Heart right ventricle (tissue), 16 donors: ENCODE measurements at regions of chr20 and their contacts with region 1.

Region 1: GRCh38 chr20:56574531-56575142 is 41.6 kb downstream of the FAM209B start:
- DNase-seq: no peak
- ATAC-seq: peak in 1 of 8 donors; percentile 35
- H3K4me3 ChIP-seq: no peak overlapping the region
- H3K27ac ChIP-seq: no peak overlapping the region
- H3K4me1 ChIP-seq: no peaks in the 10 kb centered on the region
- H3K27me3 ChIP-seq: peaks cover 0 to 5% (median 0%) of the 10 kb centered on the region in 7 donors
- CTCF ChIP-seq: no peak

Region 2: DNA sequence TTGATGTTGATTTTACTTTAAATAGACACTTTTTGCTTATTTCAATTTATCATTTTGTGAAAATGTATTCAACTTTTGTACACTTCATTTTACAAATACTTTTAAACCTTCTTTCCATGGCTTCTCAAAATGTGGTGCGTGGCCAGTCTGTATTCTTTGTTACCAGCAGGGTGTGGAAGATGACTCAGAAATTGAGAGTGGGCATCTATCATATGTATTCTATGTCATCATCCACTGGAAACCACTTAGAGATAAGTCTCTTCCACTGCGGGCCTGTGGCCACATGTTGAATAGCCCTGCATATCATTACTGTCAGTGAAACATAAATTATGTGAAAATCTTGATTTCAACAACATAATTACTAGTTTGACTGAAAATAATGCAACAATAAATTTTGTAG is 378.7 kb before region 1 on chr20:
- intact Hi-C with region 1: no loop called
- DNase-seq: no peak
- ATAC-seq: no peak
- H3K4me3 ChIP-seq: no peak overlapping the region
- H3K27ac ChIP-seq: no peak overlapping the region
- H3K4me1 ChIP-seq: no peaks in the 10 kb centered on the region
- H3K27me3 ChIP-seq: peaks cover 0 to 7% (median 0%) of the 10 kb centered on the region in 7 donors
- CTCF ChIP-seq: no peak

Region 3: GRCh38 chr20:56222196-56222595 is 352.4 kb before region 1 on chr20:
- intact Hi-C with region 1: loop called in 1 of 10 experiments (anchors 10 kb)
- DNase-seq: no peak
- ATAC-seq: no peak
- H3K4me3 ChIP-seq: no peak overlapping the region
- H3K27ac ChIP-seq: no peak overlapping the region
- H3K4me1 ChIP-seq: no peaks in the 10 kb centered on the region
- H3K27me3 ChIP-seq: peaks cover 0 to 9% (median 0%) of the 10 kb centered on the region in 7 donors
- CTCF ChIP-seq: no peak

Region 4: DNA sequence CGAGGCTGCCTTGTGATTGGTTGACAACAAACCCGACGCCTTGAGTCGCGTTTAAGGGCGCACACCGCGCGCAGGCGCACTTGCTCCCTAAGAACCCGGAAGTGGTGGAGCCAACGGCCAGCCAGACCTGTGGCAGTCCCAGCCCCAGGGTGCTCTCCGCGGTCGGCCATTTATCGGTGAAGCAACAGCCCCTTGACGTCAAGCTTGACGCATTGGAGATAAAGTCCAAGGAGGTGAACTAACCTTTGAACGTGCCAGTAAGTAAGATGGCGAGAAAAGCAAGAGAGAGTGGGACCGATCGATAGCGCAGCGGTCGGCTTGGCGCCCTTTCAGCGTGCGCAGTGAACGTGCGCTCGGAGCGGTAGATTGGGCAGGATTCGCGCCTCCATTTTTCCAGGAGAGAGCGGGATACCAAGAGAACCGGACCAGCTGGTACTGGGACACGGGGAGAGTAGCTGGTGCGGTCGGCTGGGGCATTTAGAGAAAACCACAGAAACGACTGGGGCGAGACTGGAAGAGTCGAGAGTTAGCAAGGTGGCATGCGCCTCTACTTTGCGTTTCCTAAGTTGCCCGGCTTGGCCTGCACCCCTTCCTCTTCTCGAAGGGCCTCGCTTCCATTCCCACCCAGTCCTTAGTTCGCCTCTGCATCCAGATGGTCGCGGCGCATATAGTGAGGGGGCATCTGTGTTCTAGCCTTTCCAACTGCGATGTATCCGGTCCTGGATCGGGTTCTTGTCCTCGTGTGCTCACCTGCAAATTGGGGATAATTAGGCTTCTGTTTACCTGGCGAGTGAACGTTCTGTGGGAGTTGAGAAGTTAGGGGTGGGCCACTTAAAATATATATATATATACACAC is 182.1 kb before region 1 on chr20 and contains the start of gene CSTF1:
- intact Hi-C with region 1: loop called in 2 of 10 experiments (anchors 5 to 10 kb)
- DNase-seq: peak; percentile 99 to 100
- ATAC-seq: peak; percentile 97 to 100 (median 98)
- H3K4me3 ChIP-seq: peak within 1 kb of the TSS; percentile 57 to 94 (median 80)
- H3K27ac ChIP-seq: peak within 1 kb of the TSS; percentile 1 to 93 (median 84)
- H3K4me1 ChIP-seq: peaks cover 2 to 31% (median 23%) of the 10 kb centered on the region in 9 donors
- H3K27me3 ChIP-seq: no peaks in the 10 kb centered on the region
- CTCF ChIP-seq: no peak
- total RNA-seq, gene CSTF1: 16.3 to 23.7 (median 21.6) TPM

Region 5: GRCh38 chr20:56400090-56400542 is 174.5 kb before region 1 on chr20:
- intact Hi-C with region 1: loop called in 3 of 10 experiments (anchors 5 to 10 kb)
- DNase-seq: peak in 1 of 2 donors; percentile 71
- ATAC-seq: peak in 5 of 8 donors; percentile 53 to 78 (median 68)
- H3K4me3 ChIP-seq: no peak overlapping the region
- H3K27ac ChIP-seq: no peak overlapping the region
- H3K4me1 ChIP-seq: peaks cover 0 to 11% (median 5%) of the 10 kb centered on the region in 9 donors
- H3K27me3 ChIP-seq: no peaks in the 10 kb centered on the region
- CTCF ChIP-seq: peak; percentile 65 to 92 (median 86)

Region 6: GRCh38 chr20:56558968-56559367 is 15.7 kb before region 1 on chr20:
- intact Hi-C with region 1: no loop called
- DNase-seq: peak; percentile 16 to 18
- ATAC-seq: peak in 7 of 8 donors; percentile 9 to 63 (median 40)
- H3K4me3 ChIP-seq: no peak overlapping the region
- H3K27ac ChIP-seq: peak overlapping the region in 7 of 10 donors; percentile 30 to 76 (median 61)
- H3K4me1 ChIP-seq: peaks cover 0 to 29% (median 15%) of the 10 kb centered on the region in 9 donors
- H3K27me3 ChIP-seq: no peaks in the 10 kb centered on the region
- CTCF ChIP-seq: no peak